Heart right ventricle (tissue), 16 donors: ENCODE measurements at regions of chr11 and their contacts with region 1.

Region 1: GRCh38 chr11:62841361-62842184 is 2.2 kb upstream of the WDR74 start:
- DNase-seq: peak; percentile 70 to 95
- ATAC-seq: peak; percentile 68 to 83 (median 79)
- H3K4me3 ChIP-seq: peak overlapping the region; percentile 19 to 99 (median 77)
- H3K27ac ChIP-seq: peak overlapping the region; percentile 92 to 98 (median 97)
- H3K4me1 ChIP-seq: peaks cover 0 to 36% (median 24%) of the 10 kb centered on the region in 9 donors
- H3K27me3 ChIP-seq: no peaks in the 10 kb centered on the region
- CTCF ChIP-seq: no peak

Region 2: GRCh38 chr11:62678770-62679696 is 162.5 kb before region 1 on chr11 and contains the start of gene UBXN1:
- intact Hi-C with region 1: no loop called
- DNase-seq: peak; percentile 88 to 94
- ATAC-seq: peak; percentile 90 to 93 (median 93)
- H3K4me3 ChIP-seq: peak within 1 kb of the TSS; percentile 68 to 100 (median 94)
- H3K27ac ChIP-seq: peak within 1 kb of the TSS; percentile 55 to 97 (median 92)
- H3K4me1 ChIP-seq: peaks cover 8 to 45% (median 33%) of the 10 kb centered on the region in 9 donors
- H3K27me3 ChIP-seq: no peaks in the 10 kb centered on the region
- CTCF ChIP-seq: no peak
- total RNA-seq, gene UBXN1: 57.8 to 100 (median 81.2) TPM

Region 3: GRCh38 chr11:62705880-62706849 is 135.4 kb before region 1 on chr11:
- intact Hi-C with region 1: loop called in 1 of 10 experiments (anchors 5 kb)
- DNase-seq: peak; percentile 93 to 96
- ATAC-seq: peak; percentile 85 to 90 (median 88)
- H3K4me3 ChIP-seq: peak overlapping the region; percentile 42 to 90 (median 72)
- H3K27ac ChIP-seq: peak overlapping the region; percentile 63 to 91 (median 81)
- H3K4me1 ChIP-seq: peaks cover 23 to 61% (median 40%) of the 10 kb centered on the region in 9 donors
- H3K27me3 ChIP-seq: no peaks in the 10 kb centered on the region
- CTCF ChIP-seq: no peak

Region 4: DNA sequence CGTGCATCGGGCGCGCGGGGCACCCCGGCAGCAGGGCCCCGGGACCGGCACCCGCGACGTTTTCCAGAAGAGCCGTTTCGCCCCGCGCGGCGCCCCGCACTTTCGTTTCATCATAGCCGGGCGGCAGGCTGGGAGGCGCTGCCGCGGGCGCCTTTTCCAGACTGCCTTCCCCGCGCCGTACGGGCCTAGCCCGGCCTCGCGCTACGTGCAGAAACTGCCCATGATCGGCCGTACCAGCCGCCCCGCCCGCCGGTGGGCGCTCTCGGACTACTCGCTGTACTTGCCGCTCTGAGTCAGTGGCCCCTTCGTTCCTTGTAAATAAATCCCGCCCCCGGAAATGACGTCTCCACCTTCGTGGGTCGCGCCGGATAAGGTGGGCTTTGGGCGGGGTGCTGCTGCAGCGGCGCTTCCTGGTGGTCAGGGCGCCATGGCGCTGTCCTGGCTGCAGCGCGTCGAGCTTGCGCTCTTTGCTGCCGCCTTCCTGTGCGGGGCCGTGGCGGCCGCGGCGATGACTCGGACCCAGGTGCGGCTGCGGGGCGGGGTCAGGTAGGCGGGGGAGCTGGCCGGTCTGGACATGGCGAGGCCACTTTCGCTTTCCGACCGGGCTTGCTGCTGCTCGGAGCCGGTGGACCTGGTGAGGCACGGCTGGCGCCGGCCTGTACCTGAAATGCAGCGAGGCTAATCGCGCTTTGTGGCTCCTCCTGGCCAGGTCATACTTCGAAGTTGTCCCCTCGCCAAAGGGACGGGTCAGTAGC is 54.4 kb before region 1 on chr11 and contains the start of gene TMEM179B:
- intact Hi-C with region 1: loop called in 3 of 10 experiments (anchors 2 to 10 kb)
- DNase-seq: peak; percentile 94 to 99
- ATAC-seq: peak; percentile 86 to 92 (median 89)
- H3K4me3 ChIP-seq: peak within 1 kb of the TSS; percentile 87 to 96 (median 92)
- H3K27ac ChIP-seq: peak within 1 kb of the TSS; percentile 91 to 99 (median 97)
- H3K4me1 ChIP-seq: peaks cover 10 to 54% (median 49%) of the 10 kb centered on the region in 9 donors
- H3K27me3 ChIP-seq: no peaks in the 10 kb centered on the region
- CTCF ChIP-seq: peak in 8 of 9 donors; percentile 4 to 60 (median 38)
- total RNA-seq, gene TMEM179B: 9.4 to 27.2 (median 17.4) TPM

Region 5: DNA sequence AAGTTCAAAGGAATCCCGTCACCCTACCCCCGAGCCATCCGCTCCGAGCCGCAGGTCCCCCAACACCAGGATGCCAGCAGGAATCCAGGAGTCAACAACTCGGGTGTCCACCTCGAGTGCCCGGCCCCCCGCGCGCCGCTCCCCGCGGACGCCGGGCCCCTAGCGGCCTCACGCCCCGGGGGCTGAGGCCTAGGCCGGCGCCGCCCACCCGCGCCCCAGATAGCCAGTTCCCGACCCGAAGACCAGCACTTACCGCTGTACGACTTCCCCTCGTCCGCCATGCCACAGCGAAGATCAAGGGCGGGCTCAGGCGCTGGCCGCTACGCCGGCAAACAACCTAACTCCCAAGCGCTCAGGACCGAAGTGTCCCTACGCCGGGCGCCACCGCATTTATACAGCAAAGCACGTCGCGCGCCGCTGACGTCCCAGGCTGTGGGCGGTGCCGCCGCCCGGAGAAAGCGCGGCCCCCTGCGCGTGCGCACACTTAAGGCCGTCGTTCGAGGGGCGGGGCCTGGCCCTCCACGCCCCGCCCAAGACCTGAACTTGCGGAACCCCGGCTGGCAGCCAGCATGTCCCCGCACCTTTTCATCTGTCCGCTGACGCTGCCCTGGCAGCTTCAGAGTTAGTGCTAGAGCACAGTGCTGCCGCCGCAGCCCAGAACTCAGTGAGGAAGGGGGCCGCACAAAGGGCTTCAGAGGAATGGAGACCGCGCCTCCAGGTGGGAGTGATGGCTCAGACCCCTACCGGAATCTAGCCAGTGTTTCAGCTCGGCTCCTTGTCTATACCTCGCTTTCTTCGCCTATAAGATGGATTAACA is 36.3 kb before region 1 on chr11 and contains the start of gene NXF1:
- intact Hi-C with region 1: loop called in 1 of 10 experiments (anchors 2 kb)
- DNase-seq: peak; percentile 94 to 96
- ATAC-seq: peak; percentile 92 to 97 (median 96)
- H3K4me3 ChIP-seq: peak within 1 kb of the TSS; percentile 36 to 88 (median 82)
- H3K27ac ChIP-seq: peak within 1 kb of the TSS; percentile 61 to 95 (median 90)
- H3K4me1 ChIP-seq: peaks cover 14 to 47% (median 31%) of the 10 kb centered on the region in 9 donors
- H3K27me3 ChIP-seq: no peaks in the 10 kb centered on the region
- CTCF ChIP-seq: peak in 2 of 9 donors; percentile 12 to 25
- total RNA-seq, gene NXF1: 28.3 to 58.7 (median 36.7) TPM

Region 6: GRCh38 chr11:62880803-62881578 is 39.4 kb after region 1 on chr11 and contains the start of gene SLC3A2:
- intact Hi-C with region 1: loop called in 1 of 10 experiments (anchors 2 kb)
- DNase-seq: peak; percentile 86 to 89
- ATAC-seq: peak; percentile 90 to 95 (median 94)
- H3K4me3 ChIP-seq: peak within 1 kb of the TSS; percentile 46 to 100 (median 88)
- H3K27ac ChIP-seq: peak within 1 kb of the TSS; percentile 79 to 100 (median 98)
- H3K4me1 ChIP-seq: peaks cover 16 to 57% (median 41%) of the 10 kb centered on the region in 9 donors
- H3K27me3 ChIP-seq: no peaks in the 10 kb centered on the region
- CTCF ChIP-seq: peak; percentile 21 to 93 (median 70)
- total RNA-seq, gene SLC3A2: 32.0 to 78.4 (median 42.6) TPM

Region 7: DNA sequence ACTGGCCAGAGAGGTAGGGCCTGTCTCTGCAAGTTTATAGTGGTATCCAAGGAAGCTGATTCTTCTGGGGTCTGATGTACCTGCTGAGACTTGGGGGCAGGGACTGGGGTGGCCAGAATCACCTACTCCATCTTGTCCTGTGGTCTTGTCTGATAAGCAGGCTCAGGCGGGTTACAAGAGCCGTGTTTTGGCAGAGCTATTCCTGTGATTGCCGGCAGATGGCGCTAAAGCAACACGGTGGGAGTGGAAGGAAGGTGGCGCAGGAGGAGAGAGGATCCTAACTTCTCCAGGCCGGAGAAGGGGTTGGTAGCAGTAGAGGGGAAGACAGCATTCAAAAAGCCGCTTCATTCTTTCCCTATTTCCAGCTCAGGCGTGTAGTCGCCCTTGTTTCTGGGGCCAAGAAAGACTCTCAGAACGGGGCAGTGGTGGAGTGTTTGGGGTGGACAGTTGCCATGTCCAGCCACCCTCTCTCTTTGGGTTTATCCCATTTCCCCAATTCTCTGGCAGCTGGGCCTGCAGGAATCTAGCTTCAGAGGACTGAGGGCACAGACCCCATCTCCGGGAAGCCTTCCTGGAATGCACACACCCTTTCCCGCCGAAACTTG is 64.5 kb after region 1 on chr11:
- intact Hi-C with region 1: no loop called
- DNase-seq: peak; percentile 78 to 81
- ATAC-seq: peak; percentile 70 to 83 (median 75)
- H3K4me3 ChIP-seq: no peak overlapping the region
- H3K27ac ChIP-seq: no peak overlapping the region
- H3K4me1 ChIP-seq: peaks cover 4 to 27% (median 17%) of the 10 kb centered on the region in 9 donors
- H3K27me3 ChIP-seq: no peaks in the 10 kb centered on the region
- CTCF ChIP-seq: peak; percentile 96 to 100 (median 99)